BJ (cell line): ENCODE measurements at regions of chr1 and their contacts with region 1.

Region 1: GRCh38 chr1:113677250-113678158 is 81.8 kb downstream of the PHTF1 start:
- DNase-seq: peak; percentile 1
- H3K4me3 ChIP-seq: no peak overlapping the region
- H3K27me3 ChIP-seq: no peaks in the 10 kb centered on the region
- CTCF ChIP-seq: peak; percentile 51

Region 2: DNA sequence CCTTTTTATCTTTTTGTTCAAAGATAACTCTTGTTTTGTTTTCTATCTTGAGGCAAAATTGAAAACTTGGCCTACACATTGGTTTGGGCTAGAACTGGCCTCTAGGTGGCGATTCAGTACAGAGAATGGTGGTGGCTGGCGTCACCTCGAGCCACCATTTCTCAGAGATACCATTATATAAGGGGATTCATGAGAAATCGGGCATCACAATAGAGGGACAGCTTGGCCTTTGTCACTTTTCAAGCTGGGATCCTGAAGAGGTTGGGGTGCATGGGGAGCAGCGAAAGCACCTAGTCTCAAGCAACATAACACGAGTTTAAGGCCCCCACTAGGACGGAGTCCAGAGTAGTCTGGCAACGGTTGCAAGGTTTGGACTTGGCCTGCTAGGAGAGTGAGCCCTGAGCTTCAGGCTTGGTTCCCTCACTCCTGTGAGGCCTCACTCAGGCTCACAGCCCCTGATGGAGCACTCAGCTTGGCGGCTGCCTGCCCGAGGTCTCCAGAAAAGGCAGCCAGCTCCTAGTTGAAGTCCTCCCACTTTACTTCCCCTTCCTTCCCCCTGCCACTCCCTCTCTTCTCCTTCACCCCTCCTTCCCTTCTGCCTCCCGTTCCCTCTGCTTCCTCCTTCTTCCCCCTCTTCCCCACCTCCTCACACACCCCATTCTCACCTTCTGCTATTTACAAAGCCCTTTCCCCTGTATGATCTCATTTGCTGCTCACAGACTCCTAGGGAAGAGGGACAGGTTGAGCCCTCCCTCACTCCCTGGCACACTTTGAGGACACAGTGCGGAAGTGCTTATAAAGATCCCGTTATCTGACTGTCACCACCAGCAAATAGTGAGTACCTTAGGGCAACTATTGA is 536.7 kb before region 1 on chr1:
- CTCF ChIA-PET with region 1: interaction called, 24 read pairs
- POLR2A ChIA-PET with region 1: no interaction called
- DNase-seq: no peak
- H3K4me3 ChIP-seq: no peak overlapping the region
- H3K27me3 ChIP-seq: no peaks in the 10 kb centered on the region
- CTCF ChIP-seq: peak; percentile 79